Activated naive CD4-positive, alpha-beta T cell treated with anti-CD3 and anti-CD28 coated beads for 36 hours (primary cell): ENCODE measurements at regions of chr7 and their contacts with region 1.

Region 1: DNA sequence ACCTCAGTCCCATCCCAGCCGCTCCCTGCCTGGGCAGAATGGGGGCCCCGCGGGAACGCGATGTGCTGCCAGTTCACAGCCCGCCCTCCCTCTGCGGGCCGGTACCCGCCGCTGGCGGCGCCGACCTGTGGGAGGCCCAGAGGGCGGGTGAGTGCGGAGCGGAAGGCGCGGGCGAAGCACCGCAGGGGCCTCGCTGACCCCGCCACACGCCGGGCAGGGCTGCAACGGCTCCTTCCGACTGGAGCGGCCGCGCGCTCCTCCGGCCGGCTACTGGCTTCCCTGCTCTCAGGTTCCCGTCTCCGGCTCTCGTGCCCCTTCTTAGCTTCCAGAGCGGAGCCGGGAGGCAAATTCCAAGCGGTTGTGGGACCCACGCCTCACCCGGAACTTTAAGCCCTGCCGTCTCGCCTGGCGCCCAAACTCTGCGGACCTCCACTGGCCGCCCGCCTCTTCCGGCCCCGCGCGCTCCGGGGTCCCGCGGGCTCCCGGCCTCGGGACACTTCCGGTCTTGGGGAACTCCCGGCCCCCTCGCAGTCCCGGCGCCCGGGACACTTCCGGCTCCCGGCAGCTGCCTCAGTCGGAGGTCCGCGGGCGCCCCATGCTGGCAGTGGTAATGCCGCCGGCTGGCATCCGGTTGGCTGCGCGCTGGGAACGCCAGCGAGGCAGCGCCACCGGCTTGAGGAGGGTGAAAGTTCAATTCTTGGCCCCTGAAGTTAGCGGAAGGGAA is at the start of gene CYREN:
- DNase-seq: peak; percentile 97
- H3K4me3 Mint-ChIP-seq: peak within 1 kb of the TSS; percentile 89
- H3K27ac Mint-ChIP-seq: peak within 1 kb of the TSS; percentile 95
- H3K4me1 Mint-ChIP-seq: peaks cover 43% of the 10 kb centered on the region
- H3K27me3 Mint-ChIP-seq: no peaks in the 10 kb centered on the region
- total RNA-seq, gene CYREN: 36.7 to 39.0 TPM

Region 2: DNA sequence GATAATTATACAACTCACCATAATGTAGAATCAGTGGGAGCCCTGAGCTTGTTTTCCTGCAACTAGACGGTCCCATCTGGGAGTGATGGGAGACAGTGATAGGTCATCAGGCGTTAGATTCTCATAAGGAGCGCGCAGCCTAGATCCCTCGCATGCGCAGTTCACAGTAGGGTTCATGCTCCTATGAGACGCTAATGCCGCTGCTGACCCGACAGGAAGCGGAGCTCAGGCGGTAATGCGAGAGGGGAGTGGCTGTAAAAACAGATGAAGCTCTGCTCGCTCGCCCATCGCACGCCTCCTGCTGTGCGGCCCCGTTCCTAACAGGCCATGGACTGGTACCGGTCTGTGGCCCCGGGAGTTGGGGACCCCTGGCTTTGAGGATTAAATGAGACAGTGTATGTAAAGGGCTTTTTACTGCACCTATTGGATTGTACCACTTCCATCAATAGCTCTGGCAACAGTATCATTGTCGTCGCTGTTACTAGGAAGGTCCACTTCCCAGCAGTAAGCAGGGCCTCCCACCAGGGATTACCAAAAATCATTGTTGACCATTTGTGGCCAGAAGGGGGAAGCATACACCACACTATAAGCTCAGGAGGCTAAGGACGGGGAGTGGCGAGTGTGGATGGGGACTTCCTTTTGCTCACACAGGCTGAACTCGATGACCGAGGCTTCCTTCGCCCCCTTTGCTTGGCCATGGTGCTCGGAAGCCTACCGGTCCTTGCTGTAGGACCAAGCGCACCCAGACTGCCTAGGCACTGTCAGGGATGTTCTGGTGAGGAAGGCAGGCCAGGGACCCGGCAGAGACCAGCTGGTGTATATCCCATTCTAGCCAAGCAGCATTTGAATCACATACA is 737.9 kb before region 1 on chr7:
- CTCF ChIA-PET with region 1: no interaction called
- intact Hi-C with region 1: loop called (anchors 2 kb)
- DNase-seq: peak; percentile 82
- H3K4me3 Mint-ChIP-seq: peak overlapping the region; percentile 72
- H3K27ac Mint-ChIP-seq: peak overlapping the region; percentile 79
- H3K4me1 Mint-ChIP-seq: peaks cover 7% of the 10 kb centered on the region
- H3K27me3 Mint-ChIP-seq: no peaks in the 10 kb centered on the region

Region 3: DNA sequence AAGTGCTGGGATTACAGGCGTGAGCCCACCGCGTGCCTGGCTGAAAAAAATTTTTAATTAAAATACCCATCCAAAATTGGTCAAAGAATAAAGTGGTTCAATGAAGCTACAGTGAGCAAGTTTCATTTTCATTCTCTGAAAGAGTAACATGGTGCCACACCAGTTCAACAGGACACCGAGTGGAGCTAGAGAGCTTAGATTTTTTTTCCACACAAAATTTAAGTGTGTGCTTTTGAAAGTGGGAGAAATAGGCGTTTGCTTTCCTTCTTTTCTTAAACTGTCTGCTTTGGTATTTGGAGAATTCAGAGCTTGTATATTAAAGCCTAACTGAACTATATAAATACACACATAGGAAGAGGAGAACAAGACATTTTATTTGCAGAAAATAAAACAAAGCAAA is 480.4 kb before region 1 on chr7:
- CTCF ChIA-PET with region 1: no interaction called
- intact Hi-C with region 1: loop called (anchors 1 kb)
- DNase-seq: peak; percentile 13
- H3K4me3 Mint-ChIP-seq: no peak overlapping the region
- H3K27ac Mint-ChIP-seq: no peak overlapping the region
- H3K4me1 Mint-ChIP-seq: peaks cover 14% of the 10 kb centered on the region
- H3K27me3 Mint-ChIP-seq: no peaks in the 10 kb centered on the region

Region 4: DNA sequence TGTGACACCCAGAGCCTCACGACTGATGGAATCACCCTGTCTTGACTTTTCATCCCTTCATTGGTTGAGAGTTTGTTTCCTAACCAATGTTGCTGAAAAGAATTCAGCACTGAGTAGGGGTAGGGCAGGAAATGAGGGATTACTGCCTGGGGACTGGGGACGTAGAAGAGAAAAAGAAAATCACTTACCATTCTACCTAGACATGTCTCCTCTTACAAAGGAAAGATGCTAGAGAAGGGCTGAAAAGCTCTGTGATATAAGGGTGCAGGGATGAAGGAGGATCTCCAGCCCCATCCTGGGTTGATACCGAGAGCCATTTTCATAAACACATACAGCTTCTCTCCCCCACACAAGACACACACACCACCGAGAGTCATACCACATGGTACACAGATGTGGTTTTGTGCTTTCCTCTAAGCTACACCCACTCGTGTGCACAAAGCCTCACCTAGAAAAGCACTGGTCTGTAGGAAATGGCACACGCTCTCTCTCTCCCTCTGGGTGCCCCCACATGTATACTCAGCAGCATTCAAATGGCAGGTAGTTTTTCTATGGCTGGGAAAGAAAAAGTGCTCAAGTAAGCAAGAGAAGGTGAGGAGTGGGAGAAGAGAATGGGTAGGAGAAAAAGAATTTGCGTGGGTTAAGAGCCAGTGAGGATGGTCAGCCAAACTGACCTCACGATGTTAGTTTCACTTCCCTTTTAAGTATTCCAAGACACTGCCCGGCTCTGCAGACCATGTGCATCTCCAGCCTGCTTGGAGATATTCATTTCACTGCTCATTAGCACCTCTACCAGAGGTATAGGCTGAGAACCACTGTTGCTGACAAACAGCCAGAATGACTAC is 305.2 kb before region 1 on chr7:
- CTCF ChIA-PET with region 1: no interaction called
- intact Hi-C with region 1: loop called (anchors 1 kb)
- DNase-seq: peak; percentile 62
- H3K4me3 Mint-ChIP-seq: peak overlapping the region; percentile 65
- H3K27ac Mint-ChIP-seq: peak overlapping the region; percentile 77
- H3K4me1 Mint-ChIP-seq: peaks cover 39% of the 10 kb centered on the region
- H3K27me3 Mint-ChIP-seq: no peaks in the 10 kb centered on the region

Region 5: GRCh38 chr7:134986363-134987251 is 183.8 kb before region 1 on chr7 and contains the start of gene AGBL3:
- CTCF ChIA-PET with region 1: interaction called, 44 read pairs
- intact Hi-C with region 1: loop called (anchors 1 kb)
- DNase-seq: peak; percentile 97
- H3K4me3 Mint-ChIP-seq: peak within 1 kb of the TSS; percentile 96
- H3K27ac Mint-ChIP-seq: peak within 1 kb of the TSS; percentile 98
- H3K4me1 Mint-ChIP-seq: peaks cover 32% of the 10 kb centered on the region
- H3K27me3 Mint-ChIP-seq: no peaks in the 10 kb centered on the region
- total RNA-seq, gene AGBL3: 2.6 to 3.6 TPM

Region 6: GRCh38 chr7:135160098-135160857 is 10.2 kb before region 1 on chr7:
- CTCF ChIA-PET with region 1: interaction called, 14 read pairs
- intact Hi-C with region 1: loop called (anchors 1 kb)
- DNase-seq: peak; percentile 34
- H3K4me3 Mint-ChIP-seq: no peak overlapping the region
- H3K27ac Mint-ChIP-seq: peak overlapping the region; percentile 90
- H3K4me1 Mint-ChIP-seq: peaks cover 34% of the 10 kb centered on the region
- H3K27me3 Mint-ChIP-seq: no peaks in the 10 kb centered on the region